Activated CD4-positive, alpha-beta memory T cell treated with anti-CD3 and anti-CD28 coated beads for 36 hours (primary cell): ENCODE measurements at regions of chr7 and their contacts with region 1.

Region 1: GRCh38 chr7:107816011-107816566 is 13.1 kb upstream of the SLC26A3 start:
- DNase-seq: no peak
- H3K4me3 Mint-ChIP-seq: no peak overlapping the region
- H3K27ac Mint-ChIP-seq: peak overlapping the region; percentile 64
- H3K4me1 Mint-ChIP-seq: peaks cover 31% of the 10 kb centered on the region
- H3K27me3 Mint-ChIP-seq: no peaks in the 10 kb centered on the region

Region 2: DNA sequence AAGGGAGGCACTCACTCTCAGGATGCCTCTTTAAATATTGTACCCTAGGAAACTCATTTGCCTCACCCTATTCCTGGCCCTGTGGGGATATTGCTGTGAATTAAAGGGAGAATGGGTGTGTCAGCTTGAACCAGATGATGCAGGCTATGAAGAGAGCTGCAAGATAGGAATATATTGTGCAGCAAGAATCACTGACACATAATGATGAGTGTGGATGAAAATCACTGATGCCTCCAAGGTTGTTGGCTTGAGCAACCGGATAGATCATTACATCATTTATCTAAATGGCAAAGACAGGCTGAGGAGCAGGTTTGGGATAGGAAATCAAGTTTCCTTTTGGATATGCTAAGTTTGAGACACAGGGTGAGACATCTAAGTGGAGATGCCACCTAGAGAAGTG is 149.3 kb before region 1 on chr7:
- CTCF ChIA-PET with region 1: no interaction called
- POLR2A ChIA-PET with region 1: no interaction called
- intact Hi-C with region 1: loop called (anchors 1 kb)
- DNase-seq: no peak
- H3K4me3 Mint-ChIP-seq: no peak overlapping the region
- H3K27ac Mint-ChIP-seq: no peak overlapping the region
- H3K4me1 Mint-ChIP-seq: peaks cover 16% of the 10 kb centered on the region
- H3K27me3 Mint-ChIP-seq: peaks cover 11% of the 10 kb centered on the region

Region 3: GRCh38 chr7:107856806-107857540 is 40.9 kb after region 1 on chr7:
- CTCF ChIA-PET with region 1: no interaction called
- POLR2A ChIA-PET with region 1: no interaction called
- intact Hi-C with region 1: loop called (anchors 1 kb)
- DNase-seq: peak; percentile 54
- H3K4me3 Mint-ChIP-seq: peak overlapping the region; percentile 4
- H3K27ac Mint-ChIP-seq: peak overlapping the region; percentile 76
- H3K4me1 Mint-ChIP-seq: peaks cover 30% of the 10 kb centered on the region
- H3K27me3 Mint-ChIP-seq: no peaks in the 10 kb centered on the region

Region 4: GRCh38 chr7:107865956-107866775 is 50.1 kb after region 1 on chr7:
- CTCF ChIA-PET with region 1: interaction called, 3 read pairs
- POLR2A ChIA-PET with region 1: no interaction called
- intact Hi-C with region 1: loop called (anchors 1 kb)
- DNase-seq: peak; percentile 54
- H3K4me3 Mint-ChIP-seq: no peak overlapping the region
- H3K27ac Mint-ChIP-seq: peak overlapping the region; percentile 79
- H3K4me1 Mint-ChIP-seq: peaks cover 26% of the 10 kb centered on the region
- H3K27me3 Mint-ChIP-seq: no peaks in the 10 kb centered on the region